Activated CD4-positive, alpha-beta memory T cell treated with anti-CD3 and anti-CD28 coated beads, Interleukin-2, amount 10 ng/mL, durations not matched to agents 7 days and 5 days (primary cell): ENCODE measurements at regions of chr7 and their contacts with region 1.

Region 1: DNA sequence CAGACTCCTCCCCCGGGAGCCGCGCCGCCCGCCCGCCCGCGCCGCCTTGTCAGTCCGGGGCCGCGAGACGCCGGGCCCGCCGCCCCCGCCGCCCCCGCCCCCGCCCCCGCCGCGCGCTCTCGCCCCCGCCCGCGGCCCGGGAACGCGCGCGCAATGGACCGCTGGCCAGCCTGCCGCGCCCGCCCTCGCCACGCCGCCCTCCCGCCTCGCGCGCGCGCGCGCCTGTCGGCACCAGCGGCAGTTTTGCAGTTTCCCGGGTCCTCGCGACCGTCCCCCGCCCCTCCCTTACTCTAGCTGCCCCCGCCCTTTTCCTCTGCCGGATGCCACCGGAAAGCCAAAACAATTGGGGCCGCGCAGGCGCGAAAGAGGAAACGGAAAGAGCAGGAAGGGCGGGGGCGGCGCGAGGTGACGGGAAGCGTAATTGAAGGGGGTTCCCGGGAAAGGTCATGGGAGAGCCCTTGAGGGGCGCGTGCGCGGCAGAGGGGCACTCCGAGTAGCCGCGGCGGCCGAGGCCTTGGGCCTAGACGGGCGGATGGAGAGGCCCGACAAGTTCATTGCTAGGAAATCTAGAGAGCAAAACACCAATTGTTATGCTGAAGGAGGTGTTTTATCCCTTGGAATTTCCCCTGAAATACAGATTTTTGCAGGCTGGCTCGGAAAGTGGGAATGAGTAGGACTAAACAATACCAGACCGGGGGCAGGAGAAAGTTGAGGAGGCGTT is 400 bp upstream of the KBTBD2 start:
- DNase-seq: peak; percentile 97
- H3K4me3 Mint-ChIP-seq: peak overlapping the region; percentile 79
- H3K27ac Mint-ChIP-seq: peak overlapping the region; percentile 92
- H3K4me1 Mint-ChIP-seq: peaks cover 49% of the 10 kb centered on the region
- H3K27me3 Mint-ChIP-seq: no peaks in the 10 kb centered on the region

Region 2: GRCh38 chr7:32490127-32490822 is 401.7 kb before region 1 on chr7 and contains the start of gene LSM5:
- CTCF ChIA-PET with region 1: no interaction called
- POLR2A ChIA-PET with region 1: interaction called, 17 read pairs
- DNase-seq: peak; percentile 93
- H3K4me3 Mint-ChIP-seq: peak within 1 kb of the TSS; percentile 79
- H3K27ac Mint-ChIP-seq: peak within 1 kb of the TSS; percentile 93
- H3K4me1 Mint-ChIP-seq: peaks cover 40% of the 10 kb centered on the region
- H3K27me3 Mint-ChIP-seq: no peaks in the 10 kb centered on the region
- total RNA-seq, gene LSM5: 69.4 to 70.1 TPM

Region 3: DNA sequence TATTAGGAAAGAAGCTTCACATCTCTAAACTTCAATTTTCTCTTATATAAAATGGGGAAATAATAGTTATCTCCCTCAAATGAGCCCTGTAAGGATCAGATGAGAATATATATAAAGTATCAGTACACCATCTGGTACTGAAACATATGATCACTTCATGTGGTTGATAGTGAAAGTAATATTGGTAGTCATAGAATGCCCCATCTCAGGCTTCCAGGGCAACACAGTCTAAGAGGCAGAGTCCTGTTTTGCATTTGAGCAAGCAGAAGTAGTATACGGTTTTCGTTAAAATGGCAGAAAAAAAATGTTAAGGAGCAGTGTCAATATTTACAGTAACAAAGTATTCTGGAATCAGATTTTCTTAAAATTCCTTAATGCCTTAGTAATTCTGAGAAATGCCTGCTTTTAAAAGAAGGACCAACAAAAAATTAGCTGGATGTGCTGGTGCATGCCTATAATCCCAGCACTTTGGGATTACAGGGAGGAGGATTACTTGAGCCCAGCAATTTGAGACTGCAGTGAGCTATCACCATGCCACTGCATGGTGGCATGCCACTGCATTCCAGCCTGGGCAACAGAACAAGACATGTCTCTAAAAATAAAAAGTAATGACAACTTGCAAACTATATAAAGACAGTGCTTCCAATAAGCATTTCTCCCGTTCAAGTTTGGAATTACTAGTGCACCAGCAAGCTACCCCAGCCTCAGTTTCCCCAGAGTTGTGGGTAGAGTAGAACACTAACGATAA is 20.2 kb before region 1 on chr7:
- CTCF ChIA-PET with region 1: interaction called, 3 read pairs
- POLR2A ChIA-PET with region 1: interaction called, 52 read pairs
- DNase-seq: no peak
- H3K4me3 Mint-ChIP-seq: no peak overlapping the region
- H3K27ac Mint-ChIP-seq: no peak overlapping the region
- H3K4me1 Mint-ChIP-seq: peaks cover 19% of the 10 kb centered on the region
- H3K27me3 Mint-ChIP-seq: no peaks in the 10 kb centered on the region

Region 4: DNA sequence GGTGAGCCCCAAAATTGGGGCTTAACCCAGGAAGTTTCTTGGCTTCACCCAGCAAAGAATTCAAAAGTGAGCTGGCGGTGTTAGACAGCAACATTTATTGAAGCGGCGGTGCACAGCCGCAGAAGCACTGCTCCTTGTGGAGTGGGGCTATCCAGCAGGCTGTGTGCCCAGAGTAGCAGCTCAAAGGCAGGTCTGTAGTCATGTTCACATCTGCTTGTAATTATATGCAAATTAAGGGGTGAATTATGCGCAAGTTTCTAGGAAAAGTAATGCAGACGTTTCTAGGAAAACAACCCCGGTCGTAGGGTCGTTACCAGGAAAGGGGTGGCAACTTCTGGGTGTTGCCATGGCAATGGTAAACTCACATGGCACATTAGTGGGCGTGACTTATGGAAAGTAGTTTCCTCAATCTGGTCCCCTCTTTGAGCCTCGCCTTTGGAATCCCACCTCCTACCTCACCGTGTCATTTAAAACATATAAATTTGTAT is 13.3 kb after region 1 on chr7:
- CTCF ChIA-PET with region 1: interaction called, 21 read pairs
- POLR2A ChIA-PET with region 1: interaction called, 282 read pairs
- DNase-seq: peak; percentile 90
- H3K4me3 Mint-ChIP-seq: peak overlapping the region; percentile 75
- H3K27ac Mint-ChIP-seq: peak overlapping the region; percentile 95
- H3K4me1 Mint-ChIP-seq: peaks cover 19% of the 10 kb centered on the region
- H3K27me3 Mint-ChIP-seq: no peaks in the 10 kb centered on the region

Region 5: DNA sequence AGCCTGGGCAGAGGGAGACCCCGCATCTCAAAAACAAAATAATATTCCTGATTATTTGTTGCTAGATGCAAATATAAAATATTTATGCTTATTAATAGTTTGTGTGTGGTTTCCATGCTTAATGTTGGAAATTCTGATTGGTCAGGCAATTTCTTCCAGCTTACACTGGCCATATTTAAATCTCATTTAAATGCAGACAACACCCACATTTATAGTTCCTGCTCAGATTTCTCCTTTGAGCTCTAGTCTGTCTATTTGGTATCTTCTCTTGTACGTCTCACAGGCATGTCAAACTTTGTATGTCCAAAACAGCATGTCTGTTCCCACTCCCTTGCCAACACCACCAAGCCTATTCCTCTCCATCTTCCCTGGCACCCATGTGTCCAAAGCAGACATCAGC is 117.8 kb after region 1 on chr7:
- CTCF ChIA-PET with region 1: no interaction called
- POLR2A ChIA-PET with region 1: no interaction called
- DNase-seq: no peak
- H3K4me3 Mint-ChIP-seq: no peak overlapping the region
- H3K27ac Mint-ChIP-seq: no peak overlapping the region
- H3K4me1 Mint-ChIP-seq: no peaks in the 10 kb centered on the region
- H3K27me3 Mint-ChIP-seq: no peaks in the 10 kb centered on the region

Region 6: DNA sequence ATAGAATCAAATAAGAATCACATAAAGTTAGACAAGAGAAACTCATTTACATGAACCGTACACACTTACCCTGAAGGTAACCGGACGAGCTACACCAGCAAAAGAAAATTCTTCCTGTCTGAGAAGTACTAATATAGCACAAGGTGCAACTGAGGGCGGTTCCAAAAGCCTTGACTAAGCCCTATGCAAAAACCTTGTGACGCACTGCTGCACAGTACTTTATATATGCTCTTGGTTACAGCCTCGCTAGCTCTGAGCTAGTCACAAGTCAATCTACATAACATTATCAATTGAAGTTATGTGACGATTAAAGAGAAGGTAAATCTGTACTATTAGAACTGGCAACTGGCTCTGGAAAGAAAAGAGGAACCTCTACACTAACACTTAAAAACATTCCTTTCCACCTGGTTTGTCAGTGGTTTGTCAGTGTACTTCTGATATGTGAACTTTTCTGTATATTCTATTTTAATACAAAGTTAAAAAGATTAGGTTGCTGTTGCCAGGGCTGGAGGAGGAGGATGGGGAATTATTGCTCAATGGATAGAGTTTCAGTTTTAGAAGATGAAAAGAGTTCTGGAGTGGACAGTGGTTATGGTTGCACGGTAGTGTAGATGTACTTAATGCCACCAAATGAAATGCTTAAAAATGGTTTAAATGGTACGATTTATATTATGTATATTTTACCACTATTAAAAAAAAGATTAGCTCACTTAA is 149.0 kb after region 1 on chr7:
- CTCF ChIA-PET with region 1: interaction called, 3 read pairs
- POLR2A ChIA-PET with region 1: interaction called, 38 read pairs
- DNase-seq: peak; percentile 75
- H3K4me3 Mint-ChIP-seq: peak overlapping the region; percentile 83
- H3K27ac Mint-ChIP-seq: peak overlapping the region; percentile 81
- H3K4me1 Mint-ChIP-seq: peaks cover 45% of the 10 kb centered on the region
- H3K27me3 Mint-ChIP-seq: no peaks in the 10 kb centered on the region

Region 7: DNA sequence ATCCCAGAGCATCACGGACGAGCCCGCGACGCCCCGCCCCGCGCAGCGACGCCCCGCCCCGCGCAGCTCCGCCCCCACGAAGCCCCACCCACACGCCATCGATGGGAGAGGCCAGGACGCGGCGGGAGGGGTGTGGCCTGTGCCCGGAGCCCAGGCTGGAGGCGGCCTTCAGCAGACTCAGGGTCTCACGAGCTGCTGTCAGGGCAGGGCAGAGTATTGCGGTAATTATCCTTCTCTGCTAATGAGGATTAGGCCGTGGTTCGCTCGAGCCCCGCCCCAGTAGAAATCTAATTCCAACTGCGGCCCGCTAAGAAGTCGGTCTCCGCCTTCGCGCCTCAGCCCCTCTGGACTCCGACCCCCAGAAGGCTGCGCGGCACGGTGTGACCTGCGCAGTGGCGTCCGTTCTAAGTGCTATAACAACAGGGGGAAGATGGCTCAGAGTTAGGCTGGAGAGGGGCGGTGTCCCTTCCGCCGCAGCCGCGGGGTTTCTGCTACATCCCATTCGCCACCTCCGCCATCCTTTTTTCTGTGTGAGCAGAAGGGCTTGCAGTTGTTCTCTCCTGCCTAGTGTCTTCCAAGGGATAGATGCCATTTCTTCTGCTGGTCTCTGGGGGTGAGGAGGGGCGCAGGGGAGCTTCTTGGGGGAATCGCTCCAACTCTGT is 171.0 kb after region 1 on chr7:
- CTCF ChIA-PET with region 1: interaction called, 3 read pairs
- POLR2A ChIA-PET with region 1: interaction called, 60 read pairs
- DNase-seq: peak; percentile 92
- H3K4me3 Mint-ChIP-seq: peak overlapping the region; percentile 78
- H3K27ac Mint-ChIP-seq: peak overlapping the region; percentile 78
- H3K4me1 Mint-ChIP-seq: peaks cover 38% of the 10 kb centered on the region
- H3K27me3 Mint-ChIP-seq: peaks cover 3% of the 10 kb centered on the region